ENCODE measurements at regions of chr17 and their contacts with region 1.

Region 1: GRCh38 chr17:29283271-29283895 is 10.6 kb downstream of the NUFIP2 start:
- DNase-seq: no peak
- ATAC-seq: peak in 1 of 4 donors; percentile 31
- H3K4me3 ChIP-seq: no peak overlapping the region
- H3K27ac ChIP-seq: no peak overlapping the region
- H3K4me1 ChIP-seq: peaks cover 4 to 73% (median 58%) of the 10 kb centered on the region in 12 donors
- H3K27me3 ChIP-seq: no peaks in the 10 kb centered on the region
- CTCF ChIP-seq: peak in 3 of 12 donors; percentile 8 to 24 (median 11)
- POLR2A ChIP-seq: no peak

Region 2: DNA sequence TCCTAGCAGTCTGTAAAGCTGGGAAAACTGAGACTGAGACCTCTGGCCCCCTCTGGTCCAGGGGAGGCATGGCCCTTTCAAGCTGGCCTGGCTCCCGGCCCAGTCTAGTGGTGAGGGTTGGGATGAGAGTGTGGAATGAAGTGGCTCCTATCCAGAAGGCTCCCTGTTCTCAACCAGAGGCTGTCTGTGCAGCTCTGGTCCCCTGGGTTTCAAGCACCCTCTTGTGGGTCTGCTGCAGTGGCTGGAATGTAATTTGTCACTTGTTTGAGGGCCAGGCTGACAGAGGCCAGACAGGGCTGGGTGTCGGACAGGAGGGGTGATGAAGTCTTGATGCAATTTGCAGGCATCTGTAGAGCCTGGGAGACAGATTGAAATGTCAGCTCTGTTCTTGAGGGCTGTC is 310.0 kb before region 1 on chr17:
- intact Hi-C with region 1: loop called in 1 of 10 experiments (anchors 10 kb)
- DNase-seq: peak; percentile 78 to 93 (median 87)
- ATAC-seq: peak; percentile 82 to 89 (median 87)
- H3K4me3 ChIP-seq: no peak overlapping the region
- H3K27ac ChIP-seq: peak overlapping the region in 8 of 12 donors; percentile 16 to 86 (median 78)
- H3K4me1 ChIP-seq: peaks cover 2 to 55% (median 30%) of the 10 kb centered on the region in 12 donors
- H3K27me3 ChIP-seq: no peaks in the 10 kb centered on the region
- CTCF ChIP-seq: peak in 5 of 12 donors; percentile 10 to 31 (median 15)
- POLR2A ChIP-seq: no peak

Region 3: DNA sequence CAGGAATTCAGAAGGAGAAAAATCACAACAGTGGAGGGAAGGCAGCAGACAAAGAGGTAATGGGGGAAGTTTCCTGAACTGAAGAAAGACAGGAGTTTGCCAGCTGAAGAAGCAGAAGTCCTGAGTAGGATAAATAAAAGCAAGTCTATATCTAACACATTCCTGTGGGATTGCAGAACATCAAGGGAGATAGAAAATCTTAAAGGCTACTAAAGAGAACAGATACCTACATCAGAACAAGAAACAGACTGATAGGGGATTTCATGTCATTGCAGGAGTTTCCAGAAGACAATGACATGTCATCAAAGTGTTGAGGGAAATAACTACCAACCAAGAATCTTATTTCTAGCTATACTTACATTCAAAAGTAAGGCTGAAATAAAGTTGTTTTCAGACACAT is 58.0 kb before region 1 on chr17:
- intact Hi-C with region 1: no loop called
- DNase-seq: no peak
- ATAC-seq: no peak
- H3K4me3 ChIP-seq: no peak overlapping the region
- H3K27ac ChIP-seq: no peak overlapping the region
- H3K4me1 ChIP-seq: no peaks in the 10 kb centered on the region
- H3K27me3 ChIP-seq: no peaks in the 10 kb centered on the region
- CTCF ChIP-seq: no peak
- POLR2A ChIP-seq: no peak